H1 (cell line): ENCODE measurements at regions of chr6 and their contacts with region 1.

Region 1: GRCh38 chr6:31739639-31740396 is at the start of gene MSH5:
- DNase-seq: peak; percentile 98 to 99
- H3K4me3 ChIP-seq: peak within 1 kb of the TSS; percentile 36 to 65 (median 47)
- H3K27ac ChIP-seq: peak within 1 kb of the TSS; percentile 92
- H3K4me1 ChIP-seq: peaks cover 16 to 22% (median 21%) of the 10 kb centered on the region in 4 experiments
- H3K27me3 ChIP-seq: no peaks in the 10 kb centered on the region
- CTCF ChIP-seq: no peak
- EP300 ChIP-seq: peak in 1 of 2 experiments; percentile 35; a peak in 1 of 3 replicates
- POLR2A ChIP-seq: peak in 1 of 2 experiments; percentile 90; a peak in 2 of 3 replicates
- RAD21 ChIP-seq: no peak
- total RNA-seq, gene MSH5: 21.3 and 25.3 TPM in 2 replicates

Region 2: DNA sequence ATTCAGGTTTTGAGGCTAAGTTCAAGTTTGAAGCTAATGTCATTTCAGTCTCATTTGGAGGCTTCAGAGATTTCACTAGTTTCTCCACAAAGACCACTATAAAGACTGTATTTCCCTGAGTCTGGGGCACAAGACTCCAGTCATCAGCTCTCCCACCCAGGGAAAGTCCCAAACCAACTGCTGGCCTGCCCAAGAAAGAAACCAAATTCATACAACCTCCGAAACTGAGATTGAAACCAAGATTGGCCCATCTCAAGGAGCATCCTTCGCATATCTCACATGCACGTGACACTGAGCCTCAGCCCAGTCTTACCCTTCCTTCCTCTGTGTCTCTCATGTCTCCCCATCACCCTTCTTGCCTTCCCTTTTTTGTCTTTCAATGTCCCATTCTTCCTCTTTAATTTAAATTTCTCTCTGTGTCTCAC is 171.3 kb before region 1 on chr6:
- CTCF ChIA-PET with region 1: no interaction called
- POLR2A ChIA-PET with region 1: no interaction called
- DNase-seq: no peak
- H3K4me3 ChIP-seq: no peak overlapping the region
- H3K27ac ChIP-seq: no peak overlapping the region
- H3K4me1 ChIP-seq: no peaks in the 10 kb centered on the region; a peak in 2 of 7 replicates
- H3K27me3 ChIP-seq: no peaks in the 10 kb centered on the region
- CTCF ChIP-seq: no peak
- EP300 ChIP-seq: no peak
- POLR2A ChIP-seq: no peak
- RAD21 ChIP-seq: no peak

Region 3: GRCh38 chr6:31665501-31666336 is 74.1 kb before region 1 on chr6 and contains the start of gene CSNK2B:
- CTCF ChIA-PET with region 1: interaction called, 5 read pairs
- POLR2A ChIA-PET with region 1: interaction called, 22 read pairs
- DNase-seq: peak; percentile 88 to 91
- H3K4me3 ChIP-seq: peak within 1 kb of the TSS; percentile 88 to 94 (median 91)
- H3K27ac ChIP-seq: peak within 1 kb of the TSS; percentile 97
- H3K4me1 ChIP-seq: peaks cover 0 to 12% (median 4%) of the 10 kb centered on the region in 4 experiments; a peak in 5 of 7 replicates
- H3K27me3 ChIP-seq: no peaks in the 10 kb centered on the region
- CTCF ChIP-seq: no peak
- EP300 ChIP-seq: no peak
- POLR2A ChIP-seq: peak in 1 of 2 experiments; percentile 95; a peak in 2 of 3 replicates
- RAD21 ChIP-seq: no peak
- total RNA-seq, gene CSNK2B: 192 and 208 TPM in 2 replicates

Region 4: DNA sequence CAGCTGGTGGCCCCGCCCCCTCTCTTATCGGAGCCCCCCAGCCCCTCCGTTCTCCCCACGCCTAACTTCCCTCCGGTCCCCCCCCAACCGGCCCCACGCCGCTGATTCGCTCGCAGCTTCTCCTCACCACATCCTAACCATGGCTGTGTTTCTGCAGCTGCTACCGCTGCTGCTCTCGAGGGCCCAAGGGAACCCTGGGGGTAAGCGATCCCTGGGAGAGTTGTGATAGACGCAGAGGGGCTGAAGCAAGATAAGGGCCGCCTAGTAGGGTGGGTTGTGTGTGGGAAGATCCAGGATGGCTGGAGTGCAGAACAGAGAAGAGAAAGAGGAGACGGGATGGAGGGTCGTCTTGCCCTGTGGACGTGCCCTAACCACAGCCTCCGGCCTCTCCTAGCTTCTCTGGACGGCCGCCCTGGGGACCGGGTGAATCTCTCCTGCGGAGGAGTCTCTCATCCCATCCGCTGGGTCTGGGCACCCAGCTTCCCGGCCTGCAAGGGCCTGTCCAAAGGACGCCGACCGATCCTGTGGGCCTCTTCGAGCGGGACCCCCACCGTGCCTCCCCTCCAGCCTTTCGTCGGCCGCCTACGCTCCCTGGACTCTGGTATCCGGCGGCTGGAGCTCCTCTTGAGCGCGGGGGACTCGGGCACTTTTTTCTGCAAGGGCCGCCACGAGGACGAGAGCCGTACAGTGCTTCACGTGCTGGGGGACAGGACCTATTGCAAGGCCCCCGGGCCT is 16.4 kb before region 1 on chr6 and contains the start of gene MPIG6B:
- CTCF ChIA-PET with region 1: interaction called, 52 read pairs
- POLR2A ChIA-PET with region 1: interaction called, 73 read pairs
- DNase-seq: no peak
- H3K4me3 ChIP-seq: no peak within 1 kb of the TSS
- H3K27ac ChIP-seq: no peak within 1 kb of the TSS
- H3K4me1 ChIP-seq: peaks cover 1 to 10% (median 6%) of the 10 kb centered on the region in 4 experiments; a peak in 6 of 7 replicates
- H3K27me3 ChIP-seq: no peaks in the 10 kb centered on the region
- CTCF ChIP-seq: no peak
- EP300 ChIP-seq: no peak
- POLR2A ChIP-seq: no peak
- RAD21 ChIP-seq: no peak
- total RNA-seq, gene MPIG6B: not detected in 2 replicates

Region 5: GRCh38 chr6:31763619-31763940 is 23.8 kb after region 1 on chr6:
- CTCF ChIA-PET with region 1: interaction called, 42 read pairs
- POLR2A ChIA-PET with region 1: interaction called, 38 read pairs
- DNase-seq: no peak
- H3K4me3 ChIP-seq: no peak overlapping the region
- H3K27ac ChIP-seq: 0 out of 2 replicates have a peak overlapping the region, but pooled peaks have one; percentile 32
- H3K4me1 ChIP-seq: peaks cover 0 to 11% (median under 1%) of the 10 kb centered on the region in 4 experiments; a peak in 4 of 7 replicates
- H3K27me3 ChIP-seq: no peaks in the 10 kb centered on the region
- CTCF ChIP-seq: no peak
- EP300 ChIP-seq: peak in 1 of 2 experiments; percentile 94; a peak in 2 of 3 replicates
- POLR2A ChIP-seq: no peak
- RAD21 ChIP-seq: peak in 1 of 2 experiments; percentile 9; a peak in 1 of 4 replicates

Region 6: DNA sequence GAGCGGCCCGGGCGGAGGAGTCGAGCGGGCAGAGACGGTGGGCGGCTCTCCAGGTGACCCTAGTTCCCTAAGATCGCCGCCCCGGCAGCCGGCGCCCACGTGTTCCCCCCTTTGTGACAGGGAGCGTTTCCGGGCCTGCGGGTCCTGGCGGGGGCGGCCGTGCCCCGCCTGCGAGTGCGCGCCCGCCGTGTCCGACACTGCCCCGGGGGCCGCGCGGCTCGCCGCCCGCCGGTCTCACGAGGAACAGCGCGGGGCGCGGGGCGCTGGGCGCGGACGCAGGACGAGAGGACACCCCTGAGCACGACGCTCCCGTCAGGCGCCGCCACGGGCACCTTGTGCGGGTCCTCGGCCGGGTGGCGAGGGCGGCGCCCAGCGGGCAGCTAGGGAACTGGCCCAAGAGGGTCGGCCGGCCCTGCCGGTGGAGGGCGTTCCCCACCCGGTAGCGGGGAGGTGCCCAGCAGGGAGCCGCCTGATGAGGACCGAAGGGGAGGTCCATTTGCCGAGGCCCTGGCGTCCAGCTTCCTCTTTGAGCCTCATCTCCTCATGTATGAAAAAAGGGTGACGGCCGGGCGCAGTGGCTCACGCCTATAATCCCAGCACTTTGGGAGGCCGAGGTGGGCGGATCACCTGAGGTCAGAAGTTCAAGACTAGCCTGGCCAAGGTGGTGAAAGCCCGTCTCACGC is 55.9 kb after region 1 on chr6 and contains the start of gene VARS1:
- CTCF ChIA-PET with region 1: interaction called, 5 read pairs
- POLR2A ChIA-PET with region 1: interaction called, 20 read pairs
- DNase-seq: peak in 1 of 2 experiments; percentile 96
- H3K4me3 ChIP-seq: peak within 1 kb of the TSS; percentile 82 to 95 (median 90)
- H3K27ac ChIP-seq: peak within 1 kb of the TSS; percentile 99
- H3K4me1 ChIP-seq: peaks cover 0 to 2% (median under 1%) of the 10 kb centered on the region in 4 experiments; a peak in 3 of 7 replicates
- H3K27me3 ChIP-seq: no peaks in the 10 kb centered on the region
- CTCF ChIP-seq: peak; percentile 92 to 99 (median 94)
- EP300 ChIP-seq: peak in 1 of 2 experiments; percentile 44; a peak in 1 of 3 replicates
- POLR2A ChIP-seq: peak in 1 of 2 experiments; percentile 72; a peak in 2 of 3 replicates
- RAD21 ChIP-seq: peak; percentile 71 to 79
- total RNA-seq, gene VARS1: 162 and 163 TPM in 2 replicates

Region 7: DNA sequence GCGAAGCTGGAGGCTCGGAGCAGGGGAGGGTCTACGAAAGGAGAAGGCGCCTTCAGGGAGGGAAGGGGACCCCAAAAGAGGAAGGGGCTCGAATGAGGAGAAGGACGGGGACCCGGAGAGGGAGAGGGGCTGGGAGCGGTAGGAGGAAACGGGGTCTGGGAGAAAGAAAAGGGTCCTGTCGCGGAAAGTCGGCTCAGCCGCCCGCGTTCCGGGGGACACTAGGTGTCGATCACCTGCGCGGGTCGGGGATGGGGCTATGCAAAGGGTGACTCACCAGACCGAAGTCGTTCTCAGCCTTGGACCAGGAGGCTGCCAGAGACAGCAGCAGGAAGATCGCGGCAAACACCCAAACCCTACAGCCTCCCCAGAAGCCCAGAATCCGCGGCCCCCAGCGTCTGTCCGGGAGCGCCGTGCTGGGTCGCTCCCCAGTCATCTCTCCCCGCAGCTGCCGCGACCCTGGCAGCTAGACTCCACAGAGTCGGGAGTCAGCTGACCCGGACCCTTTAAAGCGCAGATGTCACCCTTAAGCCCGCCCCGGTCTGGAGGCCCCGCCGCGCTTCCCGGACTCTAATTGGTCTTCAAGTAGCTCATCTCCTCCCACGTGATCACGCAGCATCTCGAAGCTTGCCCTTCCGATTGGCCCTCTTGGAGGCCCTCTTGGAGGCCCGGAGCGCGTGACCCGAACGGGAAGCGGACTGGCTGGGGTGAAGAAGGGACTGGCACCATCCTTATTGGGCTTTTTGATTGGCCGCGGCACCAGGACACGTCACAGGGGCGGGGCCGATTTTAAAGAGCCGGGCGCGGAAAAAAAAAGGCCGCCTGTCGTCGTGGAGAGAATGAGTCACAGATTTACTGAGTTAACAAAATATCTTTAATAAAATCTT is 122.8 kb after region 1 on chr6 and contains the start of gene NEU1:
- CTCF ChIA-PET with region 1: no interaction called
- POLR2A ChIA-PET with region 1: interaction called, 12 read pairs
- DNase-seq: peak; percentile 97 to 99
- H3K4me3 ChIP-seq: peak within 1 kb of the TSS; percentile 73 to 96 (median 78)
- H3K27ac ChIP-seq: peak within 1 kb of the TSS; percentile 31; the same call in 1 of the 2 replicates
- H3K4me1 ChIP-seq: peaks cover 0 to 12% (median 0%) of the 10 kb centered on the region in 4 experiments; a peak in 4 of 7 replicates
- H3K27me3 ChIP-seq: 0 out of 7 replicates have a peak, but pooled peaks cover 0 to 3% (median 0%) of the 10 kb centered on the region in 4 experiments
- CTCF ChIP-seq: no peak
- EP300 ChIP-seq: no peak
- POLR2A ChIP-seq: peak; percentile 79 to 90
- RAD21 ChIP-seq: no peak
- total RNA-seq, gene NEU1: 41.2 and 43.4 TPM in 2 replicates

Region 8: GRCh38 chr6:32070814-32071543 is 331.2 kb after region 1 on chr6:
- CTCF ChIA-PET with region 1: no interaction called
- POLR2A ChIA-PET with region 1: no interaction called
- DNase-seq: no peak
- H3K4me3 ChIP-seq: no peak overlapping the region
- H3K27ac ChIP-seq: no peak overlapping the region
- H3K4me1 ChIP-seq: peaks cover 0 to 8% (median 5%) of the 10 kb centered on the region in 4 experiments; a peak in 6 of 7 replicates
- H3K27me3 ChIP-seq: no peaks in the 10 kb centered on the region; a peak in 1 of 7 replicates
- CTCF ChIP-seq: no peak
- EP300 ChIP-seq: no peak
- POLR2A ChIP-seq: no peak
- RAD21 ChIP-seq: no peak